Pancreas (tissue), 10 donors: ENCODE measurements at regions of chr11 and their contacts with region 1.

Region 1: DNA sequence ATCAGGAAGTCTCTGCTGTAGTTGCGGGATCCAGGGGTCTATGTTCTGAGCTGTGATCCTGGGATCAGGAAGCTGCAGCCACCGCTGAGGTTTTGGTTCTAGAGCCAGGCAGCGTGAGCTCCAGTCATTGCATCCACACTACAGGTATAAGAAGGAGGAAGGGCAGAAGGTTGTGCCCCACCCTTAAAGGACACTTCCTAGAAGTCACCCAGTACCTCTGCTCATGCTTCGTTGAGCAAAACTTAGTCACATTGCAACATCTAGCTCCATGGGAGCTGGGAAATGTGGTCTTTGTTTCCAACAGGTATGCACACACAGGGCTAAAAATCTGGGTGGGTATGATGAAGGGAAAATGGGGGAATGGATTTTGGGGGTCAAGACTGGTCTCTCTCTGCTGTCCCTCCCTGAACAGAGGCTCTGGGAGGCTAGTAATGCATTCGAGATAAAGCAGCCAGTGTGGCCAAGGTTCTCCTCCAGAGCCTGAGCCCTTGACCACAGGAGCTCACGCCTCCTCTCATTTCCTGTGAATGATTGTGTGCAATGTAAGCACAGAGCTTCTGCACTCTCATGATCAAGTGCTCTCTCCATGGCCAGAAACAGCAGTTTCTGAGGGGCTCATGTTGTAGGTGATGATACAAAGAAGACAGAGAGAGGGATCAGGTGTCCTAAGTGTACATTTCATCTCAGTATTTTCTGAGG is 86.8 kb upstream of the OR4B1 start:
- DNase-seq: no peak
- ATAC-seq: no peak
- H3K4me3 ChIP-seq: no peak overlapping the region
- H3K27ac ChIP-seq: no peak overlapping the region
- H3K4me1 ChIP-seq: no peaks in the 10 kb centered on the region
- H3K27me3 ChIP-seq: no peaks in the 10 kb centered on the region
- CTCF ChIP-seq: no peak

Region 2: GRCh38 chr11:47946682-47947575 is 182.9 kb before region 1 on chr11:
- intact Hi-C with region 1: loop called in 1 of 3 experiments (anchors 10 kb)
- DNase-seq: peak in 5 of 6 donors; percentile 27 to 68 (median 64)
- ATAC-seq: peak; percentile 77 to 97 (median 92)
- H3K4me3 ChIP-seq: no peak overlapping the region
- H3K27ac ChIP-seq: peak overlapping the region in 1 of 4 donors; percentile 40
- H3K4me1 ChIP-seq: peaks cover 0 to 5% (median 0%) of the 10 kb centered on the region in 3 donors
- H3K27me3 ChIP-seq: no peaks in the 10 kb centered on the region
- CTCF ChIP-seq: no peak

Region 3: GRCh38 chr11:48237727-48238126 is 107.9 kb after region 1 on chr11:
- intact Hi-C with region 1: no loop called
- DNase-seq: no peak
- ATAC-seq: no peak
- H3K4me3 ChIP-seq: no peak overlapping the region
- H3K27ac ChIP-seq: no peak overlapping the region
- H3K4me1 ChIP-seq: no peaks in the 10 kb centered on the region
- H3K27me3 ChIP-seq: peaks cover 0 to 3% (median 0%) of the 10 kb centered on the region in 4 donors
- CTCF ChIP-seq: no peak